MCF 10A (cell line): ENCODE measurements at regions of chr9 and their contacts with region 1.

Region 1: DNA sequence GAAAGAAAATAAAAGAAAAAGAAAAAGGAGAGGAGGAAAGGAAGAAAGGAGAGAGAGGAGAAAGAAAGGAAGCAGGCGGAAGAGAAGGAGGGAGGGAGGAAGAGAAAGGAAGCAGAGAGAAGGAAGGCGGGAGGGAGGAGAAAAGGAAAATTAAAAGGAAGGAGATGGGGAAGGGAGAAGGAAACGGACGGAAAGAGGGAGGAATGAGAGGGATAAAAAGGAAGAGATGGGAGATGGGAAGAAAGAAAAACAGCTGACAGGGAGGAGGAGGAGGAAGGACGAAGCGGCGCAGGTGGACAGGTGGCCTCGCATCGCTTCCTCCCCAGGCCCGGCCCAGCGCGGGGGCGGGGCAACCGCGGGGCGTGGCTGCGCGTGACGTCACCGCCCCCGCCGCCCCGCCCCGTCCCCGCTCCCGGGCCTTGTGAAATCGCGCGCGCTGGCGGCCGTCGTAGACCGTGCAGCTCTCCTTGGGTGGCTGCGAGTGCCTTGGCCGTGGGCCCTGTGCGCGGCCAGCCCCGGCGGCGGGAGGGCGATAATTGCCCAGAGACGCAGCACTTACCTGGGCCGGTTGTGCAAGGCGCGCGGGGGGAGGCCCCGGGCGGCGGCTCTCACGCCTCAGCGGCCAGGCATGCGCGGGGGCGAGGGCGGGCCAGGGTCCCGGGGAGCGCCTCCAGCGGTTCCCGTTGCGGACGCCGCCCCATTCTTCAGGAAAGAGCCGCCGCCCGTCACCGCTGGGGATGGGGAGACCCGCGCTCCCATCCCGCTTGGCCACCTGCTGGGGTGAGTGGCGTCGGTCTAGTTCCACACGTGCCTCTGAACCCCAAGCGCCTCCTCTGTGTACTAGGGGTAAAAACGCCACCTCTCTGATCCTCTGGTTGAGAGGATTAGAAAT is 49.6 kb upstream of the FOXE1 start:
- DNase-seq: peak; percentile 79
- H3K4me3 Mint-ChIP-seq: peak overlapping the region; percentile 79
- H3K27ac Mint-ChIP-seq: peak overlapping the region; percentile 92
- H3K4me1 Mint-ChIP-seq: peaks cover 34% of the 10 kb centered on the region
- H3K27me3 Mint-ChIP-seq: no peaks in the 10 kb centered on the region
- CTCF ChIP-seq: no peak

Region 2: DNA sequence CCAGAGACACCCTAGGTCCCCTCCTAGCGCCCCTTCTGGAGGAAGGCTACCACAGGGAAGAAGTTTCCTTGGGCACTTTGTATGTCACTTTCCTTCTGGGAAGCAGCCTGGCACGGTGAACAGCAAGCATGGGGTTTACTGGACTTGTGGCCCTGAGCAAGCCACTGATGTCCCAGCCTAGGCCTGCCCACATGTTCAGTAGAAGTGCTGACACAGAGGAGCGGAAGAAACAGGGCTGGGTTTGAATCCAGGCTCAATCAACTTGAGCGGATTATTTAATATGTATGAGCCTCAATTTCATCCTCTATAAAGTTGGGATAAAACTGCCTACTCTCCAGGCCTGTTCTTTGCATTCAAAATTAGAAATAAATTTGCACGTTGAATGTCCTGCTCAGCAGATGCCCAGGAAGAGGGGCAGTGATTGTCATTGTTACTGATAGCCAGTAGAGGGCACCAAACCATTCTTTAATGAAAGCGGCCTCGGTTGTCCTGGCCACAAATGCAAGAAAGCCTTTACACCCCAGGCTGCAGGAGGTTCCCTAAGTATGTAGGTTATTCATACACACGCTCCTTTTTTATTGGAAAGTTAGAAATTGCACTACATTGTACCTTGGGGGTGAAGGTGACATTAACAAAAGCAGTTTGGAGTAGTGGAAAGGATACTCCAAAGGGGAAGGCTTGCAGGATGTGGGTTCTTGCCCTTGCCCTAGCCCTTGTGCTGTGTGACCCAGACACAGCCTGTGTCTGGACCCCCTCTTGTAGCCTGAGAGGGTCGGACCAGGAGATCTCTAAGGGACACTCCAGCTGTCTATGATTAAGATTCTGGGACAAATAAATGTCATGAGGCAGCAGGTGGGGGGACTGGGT is 92.8 kb before region 1 on chr9:
- CTCF ChIA-PET with region 1: no interaction called
- POLR2A ChIA-PET with region 1: interaction called, 6 read pairs
- intact Hi-C with region 1: loop called (anchors 5 kb)
- DNase-seq: peak; percentile 75
- H3K4me3 Mint-ChIP-seq: no peak overlapping the region
- H3K27ac Mint-ChIP-seq: no peak overlapping the region
- H3K4me1 Mint-ChIP-seq: peaks cover 24% of the 10 kb centered on the region
- H3K27me3 Mint-ChIP-seq: no peaks in the 10 kb centered on the region
- CTCF ChIP-seq: peak; percentile 82

Region 3: DNA sequence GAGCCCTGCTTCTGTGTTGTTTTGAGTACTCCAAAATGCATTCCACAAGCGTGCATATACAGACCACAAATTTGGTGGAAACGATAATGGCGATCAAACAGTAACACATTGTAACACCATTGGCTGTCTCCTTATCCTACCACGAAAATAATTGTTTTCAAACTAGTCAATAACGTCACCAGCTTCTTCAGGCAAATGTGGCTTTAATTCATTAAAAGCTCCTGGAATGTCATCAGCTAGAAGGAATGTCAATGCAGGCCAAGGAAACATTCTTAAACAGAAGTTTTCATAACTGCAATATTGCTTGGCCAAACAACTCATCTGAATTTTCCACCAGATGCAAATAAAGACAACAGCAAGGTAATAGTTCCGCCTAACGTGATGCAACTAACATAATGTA is 34.7 kb before region 1 on chr9:
- CTCF ChIA-PET with region 1: interaction called, 4 read pairs
- POLR2A ChIA-PET with region 1: interaction called, 6 read pairs
- intact Hi-C with region 1: loop called (anchors 2 kb)
- DNase-seq: no peak
- H3K4me3 Mint-ChIP-seq: no peak overlapping the region
- H3K27ac Mint-ChIP-seq: no peak overlapping the region
- H3K4me1 Mint-ChIP-seq: peaks cover 47% of the 10 kb centered on the region
- H3K27me3 Mint-ChIP-seq: no peaks in the 10 kb centered on the region
- CTCF ChIP-seq: no peak

Region 4: GRCh38 chr9:97874624-97875023 is 71.2 kb after region 1 on chr9:
- CTCF ChIA-PET with region 1: no interaction called
- POLR2A ChIA-PET with region 1: interaction called, 3 read pairs
- intact Hi-C with region 1: loop called (anchors 2 kb)
- DNase-seq: no peak
- H3K4me3 Mint-ChIP-seq: no peak overlapping the region
- H3K27ac Mint-ChIP-seq: peak overlapping the region; percentile 54
- H3K4me1 Mint-ChIP-seq: peaks cover 28% of the 10 kb centered on the region
- H3K27me3 Mint-ChIP-seq: no peaks in the 10 kb centered on the region
- CTCF ChIP-seq: no peak

Region 5: GRCh38 chr9:98045234-98046179 is 242.1 kb after region 1 on chr9:
- CTCF ChIA-PET with region 1: no interaction called
- POLR2A ChIA-PET with region 1: no interaction called
- intact Hi-C with region 1: no loop called
- DNase-seq: no peak
- H3K4me3 Mint-ChIP-seq: no peak overlapping the region
- H3K27ac Mint-ChIP-seq: no peak overlapping the region
- H3K4me1 Mint-ChIP-seq: no peaks in the 10 kb centered on the region
- H3K27me3 Mint-ChIP-seq: no peaks in the 10 kb centered on the region
- CTCF ChIP-seq: no peak